Right ventricle myocardium superior (tissue), 1 donor: ENCODE measurements at regions of chr5 and their contacts with region 1.

Region 1: GRCh38 chr5:148866024-148866423 is 39.6 kb downstream of the ADRB2 start:
- DNase-seq: no peak
- ATAC-seq: no peak

Region 2: DNA sequence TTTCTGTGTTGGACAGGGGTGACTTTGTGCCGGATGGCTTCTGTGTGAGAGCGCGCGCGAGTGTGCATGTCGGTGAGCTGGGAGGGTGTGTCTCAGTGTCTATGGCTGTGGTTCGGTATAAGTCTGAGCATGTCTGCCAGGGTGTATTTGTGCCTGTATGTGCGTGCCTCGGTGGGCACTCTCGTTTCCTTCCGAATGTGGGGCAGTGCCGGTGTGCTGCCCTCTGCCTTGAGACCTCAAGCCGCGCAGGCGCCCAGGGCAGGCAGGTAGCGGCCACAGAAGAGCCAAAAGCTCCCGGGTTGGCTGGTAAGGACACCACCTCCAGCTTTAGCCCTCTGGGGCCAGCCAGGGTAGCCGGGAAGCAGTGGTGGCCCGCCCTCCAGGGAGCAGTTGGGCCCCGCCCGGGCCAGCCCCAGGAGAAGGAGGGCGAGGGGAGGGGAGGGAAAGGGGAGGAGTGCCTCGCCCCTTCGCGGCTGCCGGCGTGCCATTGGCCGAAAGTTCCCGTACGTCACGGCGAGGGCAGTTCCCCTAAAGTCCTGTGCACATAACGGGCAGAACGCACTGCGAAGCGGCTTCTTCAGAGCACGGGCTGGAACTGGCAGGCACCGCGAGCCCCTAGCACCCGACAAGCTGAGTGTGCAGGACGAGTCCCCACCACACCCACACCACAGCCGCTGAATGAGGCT is 39.8 kb before region 1 on chr5 and contains the start of gene ADRB2:
- intact Hi-C with region 1: loop called (anchors 5 kb)
- DNase-seq: peak; percentile 97
- ATAC-seq: peak; percentile 95
- total RNA-seq, gene ADRB2: 5.6 TPM